ENCODE measurements at regions of chr17 and their contacts with region 1.

Region 1: GRCh38 chr17:77957857-77958715 is at the start of gene TNRC6C:
- DNase-seq: peak; percentile 98
- ATAC-seq: peak; percentile 92
- H3K4me3 ChIP-seq: peak within 1 kb of the TSS; percentile 81 to 86 (median 85)
- H3K27ac ChIP-seq: no peak within 1 kb of the TSS
- H3K4me1 ChIP-seq: peaks cover 43% of the 10 kb centered on the region
- H3K27me3 ChIP-seq: peaks cover 6 to 47% of the 10 kb centered on the region in 2 experiments
- CTCF ChIP-seq: peak; percentile 60
- EP300 ChIP-seq: peak in 1 of 2 experiments; percentile 52; a peak in 2 of 4 replicates
- POLR2A ChIP-seq: peak; percentile 99 to 100
- RAD21 ChIP-seq: peak; percentile 75
- total RNA-seq, gene TNRC6C: 4.7 and 4.9 TPM in 2 replicates

Region 2: GRCh38 chr17:77634710-77635109 is 323.4 kb before region 1 on chr17:
- CTCF ChIA-PET with region 1: no interaction called
- POLR2A ChIA-PET with region 1: no interaction called
- in situ Hi-C with region 1: no loop called
- intact Hi-C with region 1: no loop called
- DNase-seq: no peak
- ATAC-seq: no peak
- H3K4me3 ChIP-seq: no peak overlapping the region
- H3K27ac ChIP-seq: no peak overlapping the region
- H3K4me1 ChIP-seq: no peaks in the 10 kb centered on the region
- H3K27me3 ChIP-seq: peaks cover 12 to 47% of the 10 kb centered on the region in 2 experiments; a peak in 4 of 5 replicates
- CTCF ChIP-seq: no peak
- EP300 ChIP-seq: no peak
- POLR2A ChIP-seq: no peak
- RAD21 ChIP-seq: no peak

Region 3: DNA sequence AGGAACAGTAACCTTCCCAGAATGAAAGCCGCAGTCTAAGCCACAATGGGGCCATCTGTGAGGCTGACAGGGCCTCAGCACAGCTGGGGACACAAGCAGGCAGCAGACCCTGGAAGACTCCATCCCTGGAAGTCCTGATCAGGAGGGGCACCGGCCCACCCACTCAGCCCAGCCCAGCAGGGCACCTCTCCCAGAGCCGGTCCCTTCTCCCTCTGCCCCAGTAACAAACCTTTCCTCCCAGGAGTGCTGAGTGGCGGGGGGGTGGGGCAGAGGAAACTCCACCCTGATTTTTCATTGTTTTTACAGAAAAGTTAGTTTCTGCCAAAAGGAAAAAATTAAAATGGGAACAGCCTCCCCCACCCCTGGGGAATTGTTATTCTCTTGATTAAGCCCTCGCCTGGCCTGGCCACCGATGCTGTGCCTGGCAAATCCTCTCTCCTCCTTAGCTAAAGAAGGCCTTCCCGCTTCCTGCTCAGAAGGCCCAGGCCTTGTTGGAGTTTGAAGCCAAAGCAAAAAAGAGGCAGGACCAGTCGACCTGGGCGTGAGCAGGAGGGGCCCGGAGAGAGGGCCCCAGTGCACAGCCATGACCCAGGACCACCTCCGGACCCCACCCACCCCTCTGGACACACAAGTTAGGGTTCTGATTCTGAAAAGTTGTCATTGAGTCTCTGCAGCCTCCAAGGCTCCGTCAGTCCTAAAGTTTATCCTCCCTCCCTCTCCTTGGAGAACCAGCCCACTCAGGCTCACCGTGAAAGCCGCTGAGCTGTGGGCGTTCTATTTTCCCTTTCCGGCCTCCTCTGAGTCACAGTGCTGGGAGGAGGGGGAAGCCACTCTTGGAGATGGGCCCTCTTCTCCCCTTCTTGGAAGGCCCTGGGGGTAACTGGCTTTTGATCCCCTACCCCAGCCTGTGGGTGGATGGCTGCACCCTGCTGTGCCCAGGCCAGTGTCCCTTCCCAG is 128.0 kb before region 1 on chr17:
- CTCF ChIA-PET with region 1: no interaction called
- POLR2A ChIA-PET with region 1: no interaction called
- in situ Hi-C with region 1: no loop called
- intact Hi-C with region 1: no loop called
- DNase-seq: no peak
- ATAC-seq: no peak
- H3K4me3 ChIP-seq: no peak overlapping the region
- H3K27ac ChIP-seq: no peak overlapping the region
- H3K4me1 ChIP-seq: peaks cover 14% of the 10 kb centered on the region
- H3K27me3 ChIP-seq: peaks cover 6 to 44% of the 10 kb centered on the region in 2 experiments
- CTCF ChIP-seq: no peak
- EP300 ChIP-seq: no peak
- POLR2A ChIP-seq: no peak
- RAD21 ChIP-seq: no peak

Region 4: GRCh38 chr17:77936881-77937280 is 21.2 kb before region 1 on chr17:
- CTCF ChIA-PET with region 1: no interaction called
- POLR2A ChIA-PET with region 1: interaction called, 20 read pairs
- in situ Hi-C with region 1: no loop called
- intact Hi-C with region 1: no loop called
- DNase-seq: no peak
- ATAC-seq: no peak
- H3K4me3 ChIP-seq: no peak overlapping the region
- H3K27ac ChIP-seq: no peak overlapping the region
- H3K4me1 ChIP-seq: peaks cover 20% of the 10 kb centered on the region
- H3K27me3 ChIP-seq: peaks cover 5 to 42% of the 10 kb centered on the region in 2 experiments; a peak in 4 of 5 replicates
- CTCF ChIP-seq: no peak
- EP300 ChIP-seq: no peak
- POLR2A ChIP-seq: no peak
- RAD21 ChIP-seq: no peak

Region 5: GRCh38 chr17:77942112-77942988 is 15.7 kb before region 1 on chr17:
- CTCF ChIA-PET with region 1: no interaction called
- POLR2A ChIA-PET with region 1: interaction called, 20 read pairs
- in situ Hi-C with region 1: no loop called
- intact Hi-C with region 1: no loop called
- DNase-seq: peak; percentile 76
- ATAC-seq: peak; percentile 70
- H3K4me3 ChIP-seq: no peak overlapping the region; a peak in 1 of 6 replicates
- H3K27ac ChIP-seq: no peak overlapping the region
- H3K4me1 ChIP-seq: peaks cover 20% of the 10 kb centered on the region
- H3K27me3 ChIP-seq: peaks cover 3 to 50% of the 10 kb centered on the region in 2 experiments; a peak in 4 of 5 replicates
- CTCF ChIP-seq: no peak
- EP300 ChIP-seq: no peak
- POLR2A ChIP-seq: no peak
- RAD21 ChIP-seq: no peak

Region 6: GRCh38 chr17:77968788-77969187 is 10.7 kb after region 1 on chr17:
- CTCF ChIA-PET with region 1: no interaction called
- POLR2A ChIA-PET with region 1: interaction called, 16 read pairs
- in situ Hi-C with region 1: no loop called
- intact Hi-C with region 1: no loop called
- DNase-seq: no peak
- ATAC-seq: no peak
- H3K4me3 ChIP-seq: no peak overlapping the region
- H3K27ac ChIP-seq: no peak overlapping the region
- H3K4me1 ChIP-seq: no peaks in the 10 kb centered on the region
- H3K27me3 ChIP-seq: no peaks in the 10 kb centered on the region
- CTCF ChIP-seq: no peak
- EP300 ChIP-seq: no peak
- POLR2A ChIP-seq: no peak
- RAD21 ChIP-seq: no peak

Region 7: DNA sequence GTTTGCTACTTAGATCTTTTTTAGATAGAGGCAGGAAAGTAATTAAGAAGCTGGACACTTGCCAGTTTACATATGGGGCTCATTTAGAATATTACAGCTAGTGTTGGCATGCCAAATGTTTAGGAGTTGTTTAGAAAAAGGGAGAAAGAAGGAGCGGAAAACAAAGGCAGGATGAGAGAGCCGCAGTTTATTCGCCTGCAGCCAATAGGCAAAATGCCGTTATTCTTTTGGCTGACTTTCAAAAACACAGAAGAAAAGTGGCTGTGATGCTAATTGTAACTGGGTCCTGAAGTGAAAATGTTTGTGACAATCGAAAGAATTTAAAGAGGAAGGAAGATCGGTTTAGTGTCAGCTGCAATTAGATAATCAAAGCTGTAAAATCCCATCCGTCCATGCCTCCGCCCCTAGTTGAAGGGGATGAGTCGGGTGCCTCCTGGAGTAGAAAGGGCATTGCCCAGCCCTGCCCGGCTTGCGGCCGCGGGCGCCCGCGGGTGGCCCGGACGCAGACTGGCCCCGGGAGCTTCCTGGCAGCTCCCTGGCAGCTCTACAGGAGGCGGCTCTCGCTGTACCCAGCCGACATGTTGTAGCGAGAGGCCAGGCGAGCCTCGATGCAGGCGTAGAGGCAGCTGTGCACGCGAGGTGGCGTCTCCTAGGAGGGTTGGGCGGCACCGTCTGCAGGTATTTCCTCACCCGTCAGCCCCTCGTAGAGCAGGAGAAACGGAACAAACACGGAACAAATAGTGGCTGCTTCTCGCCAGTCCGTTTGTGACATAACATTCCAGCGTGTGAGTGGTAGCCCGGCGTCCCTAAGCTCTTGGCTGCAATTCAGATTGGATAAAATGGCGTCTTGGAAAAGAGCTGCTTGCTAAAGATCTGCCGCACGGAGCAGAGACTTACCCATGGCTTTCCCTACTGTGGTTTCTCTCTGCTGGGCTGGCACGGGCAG is 82.6 kb after region 1 on chr17:
- CTCF ChIA-PET with region 1: no interaction called
- POLR2A ChIA-PET with region 1: no interaction called
- in situ Hi-C with region 1: no loop called
- intact Hi-C with region 1: no loop called
- DNase-seq: no peak
- ATAC-seq: no peak
- H3K4me3 ChIP-seq: no peak overlapping the region
- H3K27ac ChIP-seq: no peak overlapping the region
- H3K4me1 ChIP-seq: no peaks in the 10 kb centered on the region
- H3K27me3 ChIP-seq: no peaks in the 10 kb centered on the region
- CTCF ChIP-seq: no peak
- EP300 ChIP-seq: no peak
- POLR2A ChIP-seq: no peak
- RAD21 ChIP-seq: no peak

Region 8: GRCh38 chr17:78127239-78128085 is 169.4 kb after region 1 on chr17:
- CTCF ChIA-PET with region 1: no interaction called
- POLR2A ChIA-PET with region 1: no interaction called
- in situ Hi-C with region 1: no loop called
- intact Hi-C with region 1: no loop called
- DNase-seq: peak; percentile 93
- ATAC-seq: peak; percentile 62
- H3K4me3 ChIP-seq: peak overlapping the region; percentile 67 to 95 (median 86)
- H3K27ac ChIP-seq: peak overlapping the region; percentile 91
- H3K4me1 ChIP-seq: peaks cover 50% of the 10 kb centered on the region
- H3K27me3 ChIP-seq: no peaks in the 10 kb centered on the region
- CTCF ChIP-seq: no peak
- EP300 ChIP-seq: peak; percentile 24 to 82; a peak in 3 of 4 replicates
- POLR2A ChIP-seq: peak; percentile 73 to 90
- RAD21 ChIP-seq: peak; percentile 10; the same call in 1 of the 2 replicates

Measured in HepG2 (cell line).